ENCODE measurements at regions of chr1 and their contacts with region 1.

Region 1: DNA sequence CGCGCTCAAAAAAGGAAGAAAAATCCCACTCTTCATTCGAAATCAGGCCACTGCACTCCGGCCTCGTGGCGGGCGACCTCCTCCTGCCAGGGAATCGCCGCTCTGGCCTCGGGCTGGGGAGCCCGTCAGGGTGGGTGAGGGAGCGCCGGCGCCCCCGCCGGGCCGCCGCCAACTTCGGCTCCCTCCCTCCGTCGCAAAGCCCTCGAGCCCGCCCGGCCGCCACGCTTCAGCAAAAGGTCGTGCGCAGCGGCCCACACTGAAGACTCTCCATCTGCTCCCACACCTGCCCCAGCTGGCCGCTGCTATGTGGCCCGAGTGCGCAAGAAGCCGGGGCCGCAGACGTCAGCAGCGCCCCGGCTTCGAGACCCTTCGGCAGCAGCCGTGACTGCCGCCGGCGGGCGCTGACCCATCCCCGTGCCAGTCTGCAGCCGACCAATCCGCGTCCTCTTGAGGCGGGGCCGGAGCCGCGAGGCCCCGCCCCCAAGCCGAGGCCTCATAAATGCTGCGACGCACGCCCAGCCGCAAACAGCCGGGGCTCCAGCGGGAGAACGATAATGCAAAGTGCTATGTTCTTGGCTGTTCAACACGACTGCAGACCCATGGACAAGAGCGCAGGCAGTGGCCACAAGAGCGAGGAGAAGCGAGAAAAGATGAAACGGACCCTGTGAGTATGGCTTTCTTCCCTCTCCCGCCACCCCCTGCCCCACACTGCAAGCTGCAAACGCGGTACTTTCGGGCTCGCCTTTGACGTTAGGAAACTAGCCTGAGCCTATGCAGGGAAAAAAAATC is at the start of gene RGS2:
- DNase-seq: peak; percentile 82
- H3K4me3 Mint-ChIP-seq: peak within 1 kb of the TSS; percentile 95
- H3K27ac Mint-ChIP-seq: peak within 1 kb of the TSS; percentile 93
- H3K4me1 Mint-ChIP-seq: peaks cover 38% of the 10 kb centered on the region
- H3K27me3 Mint-ChIP-seq: peaks cover 7% of the 10 kb centered on the region
- total RNA-seq, gene RGS2: 5.0 and 5.8 TPM in 2 replicates

Region 2: DNA sequence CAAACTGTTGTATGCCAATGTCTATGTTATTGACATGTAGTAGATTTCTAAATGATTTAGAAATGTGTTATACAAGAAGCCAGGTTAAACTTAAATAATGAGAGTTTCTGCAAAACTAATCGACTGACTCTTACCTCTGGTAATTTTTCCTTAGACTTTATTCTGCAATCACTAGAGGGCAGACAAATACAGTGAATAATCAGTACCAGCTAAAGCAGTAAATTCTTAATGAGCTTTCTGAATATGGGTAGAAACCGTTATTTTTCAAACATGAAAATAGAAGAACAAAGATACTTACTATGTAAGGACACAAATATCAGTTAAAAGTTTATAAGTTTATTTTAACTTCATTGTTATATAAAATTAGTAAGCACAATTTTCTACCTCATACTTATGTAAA is 331.1 kb before region 1 on chr1:
- intact Hi-C with region 1: loop called (anchors 5 kb)
- DNase-seq: no peak
- H3K4me3 Mint-ChIP-seq: no peak overlapping the region
- H3K27ac Mint-ChIP-seq: no peak overlapping the region
- H3K4me1 Mint-ChIP-seq: peaks cover 3% of the 10 kb centered on the region
- H3K27me3 Mint-ChIP-seq: peaks cover 12% of the 10 kb centered on the region

Region 3: GRCh38 chr1:192545896-192546521 is 262.7 kb before region 1 on chr1:
- intact Hi-C with region 1: loop called (anchors 2 kb)
- DNase-seq: no peak
- H3K4me3 Mint-ChIP-seq: no peak overlapping the region
- H3K27ac Mint-ChIP-seq: peak overlapping the region; percentile 1
- H3K4me1 Mint-ChIP-seq: peaks cover 64% of the 10 kb centered on the region
- H3K27me3 Mint-ChIP-seq: no peaks in the 10 kb centered on the region

Region 4: GRCh38 chr1:192700834-192701271 is 107.9 kb before region 1 on chr1:
- intact Hi-C with region 1: loop called (anchors 2 kb)
- DNase-seq: no peak
- H3K4me3 Mint-ChIP-seq: no peak overlapping the region
- H3K27ac Mint-ChIP-seq: no peak overlapping the region
- H3K4me1 Mint-ChIP-seq: peaks cover 17% of the 10 kb centered on the region
- H3K27me3 Mint-ChIP-seq: peaks cover 3% of the 10 kb centered on the region

Region 5: DNA sequence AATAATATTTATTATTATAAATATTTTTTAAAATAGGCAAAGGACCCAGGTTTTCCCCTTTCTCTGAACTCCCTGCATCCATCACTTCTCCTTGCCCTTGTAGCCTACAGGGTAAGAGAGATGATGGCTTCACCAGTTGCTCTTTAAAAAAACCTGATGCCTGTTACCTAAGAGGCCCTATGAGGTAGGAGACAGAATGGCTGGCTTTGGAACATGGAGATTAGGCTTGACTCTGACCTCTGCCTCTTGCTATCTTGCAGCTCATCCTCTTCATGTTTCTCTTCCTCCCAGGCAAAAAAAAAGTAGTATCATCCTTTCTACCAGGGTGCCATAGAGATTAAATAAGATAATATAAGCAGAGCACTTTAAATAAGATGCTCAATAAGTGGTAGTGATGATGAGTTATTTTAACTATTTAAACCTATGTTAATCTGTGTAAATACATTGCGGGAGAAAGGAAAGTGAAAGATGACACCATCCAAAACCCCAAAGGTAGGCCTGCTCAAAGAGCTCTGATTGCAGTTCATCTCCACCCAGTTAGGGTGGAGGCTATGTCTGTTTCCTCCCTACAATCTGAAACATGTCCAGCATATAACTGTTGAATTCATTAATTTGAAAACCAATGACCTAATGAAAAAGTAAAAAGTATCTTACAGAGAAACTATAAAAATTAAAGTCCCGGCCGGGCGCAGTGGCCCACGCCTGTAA is 51.9 kb after region 1 on chr1:
- intact Hi-C with region 1: no loop called
- DNase-seq: no peak
- H3K4me3 Mint-ChIP-seq: no peak overlapping the region
- H3K27ac Mint-ChIP-seq: no peak overlapping the region
- H3K4me1 Mint-ChIP-seq: peaks cover 1% of the 10 kb centered on the region
- H3K27me3 Mint-ChIP-seq: no peaks in the 10 kb centered on the region

Region 6: GRCh38 chr1:193019442-193020026 is 210.8 kb after region 1 on chr1:
- intact Hi-C with region 1: loop called (anchors 1 kb)
- DNase-seq: no peak
- H3K4me3 Mint-ChIP-seq: no peak overlapping the region
- H3K27ac Mint-ChIP-seq: no peak overlapping the region
- H3K4me1 Mint-ChIP-seq: no peaks in the 10 kb centered on the region
- H3K27me3 Mint-ChIP-seq: no peaks in the 10 kb centered on the region

Region 7: DNA sequence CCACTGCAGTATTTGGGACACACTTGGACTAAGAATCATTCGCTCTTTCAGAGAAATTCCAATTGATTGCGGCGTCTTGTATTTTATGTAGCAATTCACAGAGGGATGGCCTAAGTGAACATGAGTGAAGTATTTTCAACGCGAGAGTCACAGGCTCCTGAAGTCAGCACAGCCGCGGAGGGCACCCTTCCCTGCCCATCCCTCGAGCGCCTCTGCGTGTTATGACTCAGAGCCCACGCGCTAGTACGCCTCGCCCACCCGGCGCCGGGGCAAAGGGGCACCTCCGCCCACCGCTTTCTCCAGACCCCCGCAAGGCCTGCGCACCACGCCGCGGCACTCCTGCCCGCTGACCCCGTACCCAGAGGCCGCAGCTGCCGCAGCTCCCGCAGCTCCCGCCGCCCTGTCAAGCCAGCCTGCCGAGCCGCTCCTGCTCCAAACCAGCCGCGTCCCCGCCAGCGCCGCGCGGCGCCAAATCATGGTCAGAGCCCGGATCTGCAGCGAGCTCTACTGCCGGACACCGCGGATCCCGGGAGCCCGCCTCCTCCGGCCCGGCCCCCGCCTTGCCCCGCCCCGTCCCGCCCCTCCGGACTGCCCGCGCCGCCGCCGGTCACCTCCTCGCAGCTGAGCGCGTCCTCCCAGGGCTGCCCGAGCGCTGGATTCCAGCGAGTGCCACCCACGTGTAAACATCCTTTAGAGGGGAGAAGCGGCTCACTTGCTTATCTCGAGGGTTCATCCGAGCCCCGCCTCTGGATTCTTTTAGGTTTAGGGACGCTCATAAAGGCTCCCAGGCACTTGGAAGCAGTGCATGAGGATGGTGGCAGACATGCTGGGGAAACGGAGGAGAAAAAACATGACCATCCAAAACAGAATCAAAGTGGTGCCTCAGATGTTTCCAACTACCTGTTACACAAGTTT is 296.5 kb after region 1 on chr1 and contains the start of gene GLRX2:
- intact Hi-C with region 1: loop called (anchors 5 kb)
- DNase-seq: peak; percentile 38
- H3K4me3 Mint-ChIP-seq: peak within 1 kb of the TSS; percentile 88
- H3K27ac Mint-ChIP-seq: peak within 1 kb of the TSS; percentile 71
- H3K4me1 Mint-ChIP-seq: peaks cover 17% of the 10 kb centered on the region
- H3K27me3 Mint-ChIP-seq: peaks cover 5% of the 10 kb centered on the region
- total RNA-seq, gene GLRX2: 29.0 and 31.6 TPM in 2 replicates

Region 8: GRCh38 chr1:193537266-193538002 is 728.7 kb after region 1 on chr1:
- intact Hi-C with region 1: loop called (anchors 5 kb)
- DNase-seq: peak; percentile 66
- H3K4me3 Mint-ChIP-seq: no peak overlapping the region
- H3K27ac Mint-ChIP-seq: peak overlapping the region; percentile 74
- H3K4me1 Mint-ChIP-seq: peaks cover 47% of the 10 kb centered on the region
- H3K27me3 Mint-ChIP-seq: no peaks in the 10 kb centered on the region

Measured in activated T-helper 2 cell treated with anti-CD3 and anti-CD28 coated beads, Interferon-gamma antibody, Interleukin-2, Interleukin-4, amounts not matched to agents 10 μg/mL and 5 μg/mL and 100 μg/mL, durations not matched to agents 14 hours and 24 hours and 36 hours (primary cell).